Posterior vena cava (tissue), 2 donors: ENCODE measurements at regions of chr15 and their contacts with region 1.

Region 1: GRCh38 chr15:71374607-71375352 is 259.5 kb downstream of the THSD4 start:
- DNase-seq: no peak

Region 2: DNA sequence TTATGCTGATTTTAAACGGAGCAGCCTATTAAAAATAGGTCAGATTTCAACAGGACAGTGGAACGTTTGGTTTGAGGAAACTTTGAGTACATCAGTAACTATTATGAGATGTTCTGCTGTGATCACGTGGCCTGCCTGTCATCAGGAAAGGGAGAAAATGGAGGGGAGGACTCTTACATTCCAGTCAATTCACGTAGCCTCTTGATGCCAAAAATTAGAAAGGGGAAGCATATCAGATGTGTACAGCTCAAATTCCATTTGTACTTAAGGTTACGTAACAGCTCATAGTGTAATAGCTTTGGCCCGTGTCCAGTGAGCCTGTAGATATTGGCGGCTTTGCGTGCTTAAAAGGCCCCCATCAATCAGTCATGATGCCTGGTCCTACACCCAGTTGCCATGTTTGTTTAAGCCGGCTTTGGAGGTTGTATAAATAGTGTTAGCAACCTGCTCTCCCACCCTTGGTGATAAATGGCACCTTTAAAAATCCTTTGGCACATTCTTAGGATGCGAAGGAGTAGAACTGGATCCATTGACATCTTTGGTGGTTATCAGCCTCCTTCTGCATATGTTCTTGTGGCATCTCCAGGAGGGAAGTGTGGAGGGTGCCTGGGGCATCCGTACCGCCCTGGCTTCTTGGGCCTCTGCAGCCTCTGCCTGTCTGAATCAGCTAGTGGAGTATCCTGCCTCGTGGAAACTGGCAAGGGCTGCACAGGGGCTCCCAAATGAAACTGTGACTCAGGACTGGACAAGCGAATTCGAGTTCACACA is 95.6 kb before region 1 on chr15:
- intact Hi-C with region 1: no loop called
- DNase-seq: no peak

Region 3: GRCh38 chr15:71951134-71951533 is 576.4 kb after region 1 on chr15:
- intact Hi-C with region 1: loop called in 1 of 2 experiments (anchors 5 kb)
- DNase-seq: no peak